Gastrocnemius medialis (tissue), 4 donors: ENCODE measurements at regions of chr19 and their contacts with region 1.

Region 1: DNA sequence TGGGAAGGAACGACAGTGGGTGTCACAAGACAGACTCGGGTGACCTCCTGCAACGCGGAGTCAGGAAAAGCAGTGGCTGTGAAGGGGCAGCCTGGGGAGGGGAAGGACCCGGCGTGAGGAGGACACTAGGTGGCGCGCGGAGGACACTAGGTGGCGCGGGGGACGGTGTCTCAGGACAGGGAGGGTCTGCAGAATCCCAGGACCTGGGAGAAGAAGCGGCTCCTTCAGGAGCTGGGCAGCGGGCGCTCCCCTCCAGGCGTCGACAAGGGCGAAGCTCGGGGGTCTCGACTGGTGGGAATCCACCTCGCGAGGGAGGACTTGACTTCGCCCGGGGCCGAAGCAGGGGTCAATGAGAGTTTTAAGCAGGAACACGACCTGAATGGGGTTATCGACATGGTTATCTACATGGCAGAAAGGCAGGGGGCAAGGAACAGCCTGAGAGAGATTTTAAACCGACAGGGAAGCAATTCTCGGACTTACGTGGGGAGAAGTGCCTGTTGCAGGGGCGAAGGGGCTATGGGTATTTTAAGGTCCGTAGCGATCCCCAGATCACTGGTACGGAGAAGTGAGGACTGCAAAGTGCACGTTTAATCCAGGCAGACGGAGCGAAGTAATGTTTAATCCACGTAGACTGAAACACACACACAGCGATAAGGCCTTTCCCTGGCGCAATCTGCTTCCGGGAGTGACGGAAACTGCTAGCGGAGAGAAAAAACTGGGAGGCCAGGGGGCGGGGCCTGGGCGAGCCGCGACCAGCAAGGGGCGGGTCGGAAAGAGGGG is at the start of gene ZNF616:
- DNase-seq: peak; percentile 96
- ATAC-seq: peak; percentile 97
- H3K4me3 ChIP-seq: peak within 1 kb of the TSS; percentile 71 to 94 (median 87)
- H3K27ac ChIP-seq: peak within 1 kb of the TSS; percentile 88 to 96 (median 93)
- H3K4me1 ChIP-seq: peaks cover 12 to 21% of the 10 kb centered on the region in 2 donors
- H3K27me3 ChIP-seq: no peaks in the 10 kb centered on the region
- CTCF ChIP-seq: peak; percentile 74 to 94 (median 87)
- POLR2A ChIP-seq: peak; percentile 63 to 71
- total RNA-seq, gene ZNF616: 1.1 to 5.3 (median 2.4) TPM

Region 2: GRCh38 chr19:52171321-52172169 is 32.1 kb after region 1 on chr19 and contains the start of gene ZNF836:
- in situ Hi-C with region 1: no loop called
- intact Hi-C with region 1: loop called (anchors 1 kb)
- DNase-seq: peak; percentile 83 to 84
- ATAC-seq: peak; percentile 91 to 92
- H3K4me3 ChIP-seq: peak within 1 kb of the TSS; percentile 71 to 94 (median 82)
- H3K27ac ChIP-seq: peak within 1 kb of the TSS; percentile 78 to 85 (median 84)
- H3K4me1 ChIP-seq: peaks cover 7 to 9% of the 10 kb centered on the region in 2 donors
- H3K27me3 ChIP-seq: no peaks in the 10 kb centered on the region
- CTCF ChIP-seq: no peak
- POLR2A ChIP-seq: peak in 1 of 2 donors; percentile 13
- total RNA-seq, gene ZNF836: 1.2 to 4.9 (median 2.3) TPM

Region 3: GRCh38 chr19:52189735-52190486 is 50.5 kb after region 1 on chr19 and contains the start of gene PPP2R1A:
- in situ Hi-C with region 1: no loop called
- intact Hi-C with region 1: loop called (anchors 1 kb)
- DNase-seq: peak; percentile 100
- ATAC-seq: peak; percentile 90 to 95
- H3K4me3 ChIP-seq: peak within 1 kb of the TSS; percentile 68 to 99 (median 88)
- H3K27ac ChIP-seq: peak within 1 kb of the TSS; percentile 92 to 99 (median 94)
- H3K4me1 ChIP-seq: peaks cover 47 to 53% of the 10 kb centered on the region in 2 donors
- H3K27me3 ChIP-seq: no peaks in the 10 kb centered on the region
- CTCF ChIP-seq: no peak
- POLR2A ChIP-seq: peak; percentile 88 to 95
- total RNA-seq, gene PPP2R1A: 263 to 302 (median 290) TPM

Region 4: DNA sequence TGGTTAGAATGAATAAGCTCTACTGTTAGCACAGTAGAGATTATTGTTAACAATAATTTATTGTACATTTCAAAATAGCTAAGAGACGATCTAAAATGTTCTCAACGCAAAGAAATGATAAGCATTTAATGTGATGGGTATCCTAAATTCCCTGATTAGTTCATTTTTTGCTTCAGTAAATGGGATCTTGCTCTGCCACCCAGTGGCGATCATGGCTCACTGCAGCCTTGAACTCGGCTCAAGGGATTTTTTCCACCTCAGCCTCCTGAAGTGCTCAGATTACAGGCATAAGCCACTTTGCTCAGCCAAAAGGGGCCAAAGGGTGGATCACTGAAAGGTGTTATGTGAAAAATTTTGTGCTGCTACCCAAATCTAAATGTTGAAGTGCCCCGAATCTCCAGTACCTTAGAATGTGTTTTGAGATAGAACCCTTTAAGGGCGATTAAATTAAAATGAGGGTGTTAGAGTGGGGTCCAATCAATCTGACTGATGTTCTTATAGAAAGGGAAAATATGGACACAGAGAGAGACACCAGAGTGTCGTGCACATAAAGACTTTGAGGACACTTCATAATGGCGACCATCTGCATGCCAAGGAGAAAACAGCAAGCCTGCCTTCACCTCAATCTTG is 98.4 kb after region 1 on chr19:
- in situ Hi-C with region 1: loop called (anchors 5 kb)
- intact Hi-C with region 1: loop called (anchors 1 kb)
- DNase-seq: peak; percentile 23 to 55
- ATAC-seq: peak; percentile 75 to 79
- H3K4me3 ChIP-seq: no peak overlapping the region
- H3K27ac ChIP-seq: no peak overlapping the region
- H3K4me1 ChIP-seq: no peaks in the 10 kb centered on the region
- H3K27me3 ChIP-seq: no peaks in the 10 kb centered on the region
- CTCF ChIP-seq: peak; percentile 84 to 93 (median 86)
- POLR2A ChIP-seq: no peak

Region 5: GRCh38 chr19:52248241-52248640 is 108.8 kb after region 1 on chr19:
- in situ Hi-C with region 1: loop called in 1 of 4 experiments (anchors 5 kb)
- intact Hi-C with region 1: no loop called
- DNase-seq: peak in 1 of 2 donors; percentile 17
- ATAC-seq: peak in 1 of 2 donors; percentile 49
- H3K4me3 ChIP-seq: no peak overlapping the region
- H3K27ac ChIP-seq: no peak overlapping the region
- H3K4me1 ChIP-seq: no peaks in the 10 kb centered on the region
- H3K27me3 ChIP-seq: no peaks in the 10 kb centered on the region
- CTCF ChIP-seq: peak; percentile 21 to 66 (median 52)
- POLR2A ChIP-seq: no peak

Region 6: DNA sequence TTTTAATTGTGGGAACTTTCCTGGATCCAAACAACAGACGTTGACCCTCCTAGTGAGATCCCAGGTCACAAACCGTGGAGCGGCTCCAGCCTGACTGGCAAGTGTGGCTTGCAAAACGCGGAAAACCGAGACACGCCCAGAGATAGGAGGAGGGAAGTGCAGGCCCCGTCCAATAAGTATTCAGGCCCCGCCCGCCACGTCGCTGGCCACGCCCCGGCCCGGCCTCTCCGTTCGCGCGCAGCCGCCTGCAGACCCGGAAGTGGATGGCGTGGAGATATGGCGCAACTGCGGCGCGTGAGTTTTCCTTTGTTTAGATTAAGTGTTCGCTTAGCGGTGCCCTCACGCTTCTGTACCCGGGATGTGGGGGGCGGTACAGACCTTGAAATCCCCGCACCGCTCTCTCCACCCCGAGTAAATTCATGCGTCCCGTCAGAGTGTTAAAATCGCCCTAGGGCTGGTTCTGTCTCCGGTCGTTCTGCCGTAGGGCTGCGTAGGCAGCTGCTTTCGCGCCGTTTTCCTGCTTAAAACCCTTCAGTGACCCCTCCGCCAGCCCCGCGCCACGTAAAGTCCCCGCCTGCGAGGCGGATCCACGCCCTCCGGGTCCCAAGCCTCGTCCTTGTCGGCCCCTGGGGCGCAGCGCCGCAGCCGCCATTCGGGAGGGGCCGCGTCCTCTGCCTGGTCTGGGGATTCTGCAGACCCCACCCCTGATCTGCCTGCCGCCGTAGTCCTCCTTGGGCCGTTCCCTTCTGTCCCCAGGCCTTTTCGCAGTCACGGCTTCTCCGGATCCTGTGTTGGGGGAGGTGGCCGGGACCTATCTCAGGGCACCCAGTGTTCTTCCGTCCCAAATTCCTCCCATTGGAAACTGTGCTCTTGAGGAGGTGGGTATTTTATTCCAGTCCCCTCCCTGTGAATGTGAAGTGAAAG is 130.2 kb after region 1 on chr19 and contains the start of gene ZNF766:
- in situ Hi-C with region 1: no loop called
- intact Hi-C with region 1: loop called (anchors 1 kb)
- DNase-seq: peak; percentile 95 to 97
- ATAC-seq: peak; percentile 99
- H3K4me3 ChIP-seq: peak within 1 kb of the TSS; percentile 68 to 97 (median 92)
- H3K27ac ChIP-seq: peak within 1 kb of the TSS; percentile 90 to 98 (median 94)
- H3K4me1 ChIP-seq: peaks cover 9 to 21% of the 10 kb centered on the region in 2 donors
- H3K27me3 ChIP-seq: no peaks in the 10 kb centered on the region
- CTCF ChIP-seq: no peak
- POLR2A ChIP-seq: peak; percentile 83 to 87
- total RNA-seq, gene ZNF766: 6.6 to 11.6 (median 7.7) TPM